ENCODE measurements at regions of chr2 and their contacts with region 1.

Region 1: DNA sequence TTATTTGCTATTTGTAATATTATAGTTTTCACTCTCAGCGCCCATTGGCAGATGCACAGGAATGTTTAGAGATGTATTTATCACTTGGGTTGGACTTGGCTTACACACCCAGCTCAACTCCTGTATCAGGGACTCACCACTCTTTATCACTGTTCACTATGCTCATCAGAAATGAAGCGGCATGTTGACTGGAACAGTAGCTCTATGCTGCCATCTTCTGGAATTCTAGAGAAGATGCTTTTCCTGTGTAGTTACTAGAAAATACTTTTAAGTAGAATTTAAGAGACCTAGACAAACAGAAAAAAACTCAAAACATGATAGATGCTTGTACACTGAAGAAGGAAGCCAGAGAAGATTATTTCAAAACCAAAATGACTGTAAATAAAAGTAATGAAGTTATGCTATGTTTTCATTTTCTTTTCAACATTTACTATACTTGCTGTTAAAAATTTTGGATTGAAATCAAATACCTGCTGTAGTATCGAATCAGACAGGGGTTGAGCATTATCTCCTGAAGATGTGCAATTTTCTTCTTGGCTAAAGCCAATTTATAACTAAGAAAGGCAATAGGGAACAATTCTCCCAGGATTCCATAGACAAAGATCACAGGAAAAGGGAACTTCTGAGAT is 47.4 kb upstream of the NXPH2 start:
- DNase-seq: peak; percentile 39
- H3K4me3 ChIP-seq: no peak overlapping the region
- H3K27ac ChIP-seq: no peak overlapping the region
- H3K27me3 ChIP-seq: no peaks in the 10 kb centered on the region
- CTCF ChIP-seq: peak; percentile 73

Region 2: GRCh38 chr2:137865954-137866540 is 961.5 kb before region 1 on chr2:
- CTCF ChIA-PET with region 1: interaction called, 21 read pairs
- POLR2A ChIA-PET with region 1: no interaction called
- DNase-seq: peak; percentile 16
- H3K4me3 ChIP-seq: no peak overlapping the region
- H3K27ac ChIP-seq: no peak overlapping the region
- H3K27me3 ChIP-seq: no peaks in the 10 kb centered on the region
- CTCF ChIP-seq: peak; percentile 74

Region 3: GRCh38 chr2:137888845-137889244 is 938.7 kb before region 1 on chr2:
- CTCF ChIA-PET with region 1: interaction called, 21 read pairs
- POLR2A ChIA-PET with region 1: no interaction called
- DNase-seq: no peak
- H3K4me3 ChIP-seq: no peak overlapping the region
- H3K27ac ChIP-seq: no peak overlapping the region
- H3K27me3 ChIP-seq: no peaks in the 10 kb centered on the region
- CTCF ChIP-seq: peak; percentile 56

Region 4: DNA sequence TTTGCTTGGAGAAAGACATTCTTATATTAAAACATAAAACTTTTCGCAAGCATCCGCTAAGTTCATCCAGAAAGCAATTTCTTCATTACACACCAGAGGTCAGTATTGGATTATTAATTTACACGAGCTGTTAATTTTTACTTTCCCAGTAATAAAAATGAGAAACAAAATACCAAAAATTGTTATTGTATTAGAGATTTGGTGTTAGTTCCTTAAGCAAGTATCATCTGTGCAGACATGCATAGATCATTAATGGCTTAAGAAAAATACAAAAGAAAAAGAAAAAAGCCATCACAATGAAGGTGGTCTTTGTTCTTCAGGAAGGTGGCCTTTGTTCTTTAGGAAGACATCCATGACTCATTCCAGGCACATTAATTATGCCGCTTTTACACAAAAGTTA is 916.9 kb before region 1 on chr2:
- CTCF ChIA-PET with region 1: interaction called, 40 read pairs
- POLR2A ChIA-PET with region 1: no interaction called
- DNase-seq: no peak
- H3K4me3 ChIP-seq: no peak overlapping the region
- H3K27ac ChIP-seq: no peak overlapping the region
- H3K27me3 ChIP-seq: no peaks in the 10 kb centered on the region
- CTCF ChIP-seq: peak; percentile 58

Region 5: DNA sequence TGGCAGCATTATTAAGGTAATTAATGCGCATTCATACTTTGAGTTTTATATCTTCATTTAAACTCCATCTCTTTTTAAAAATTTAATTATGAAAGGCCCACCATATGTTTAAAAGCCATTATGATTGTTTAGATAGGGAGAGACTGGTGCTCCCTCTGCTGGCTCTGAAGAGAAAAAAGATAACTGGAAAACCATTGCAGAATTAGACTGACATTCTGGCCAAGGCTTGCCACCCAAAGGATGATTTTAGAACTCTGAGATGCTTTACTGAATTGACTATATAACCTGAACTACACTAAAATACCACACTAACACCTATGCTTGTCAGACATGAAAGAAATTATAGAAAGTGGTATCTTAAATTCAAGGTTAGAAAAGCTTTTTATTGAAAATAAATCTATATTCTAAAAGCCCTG is 453.5 kb before region 1 on chr2:
- CTCF ChIA-PET with region 1: interaction called, 12 read pairs
- POLR2A ChIA-PET with region 1: no interaction called
- DNase-seq: peak; percentile 18
- H3K4me3 ChIP-seq: no peak overlapping the region
- H3K27ac ChIP-seq: no peak overlapping the region
- H3K27me3 ChIP-seq: no peaks in the 10 kb centered on the region
- CTCF ChIP-seq: peak; percentile 81

Region 6: GRCh38 chr2:138814120-138814898 is 13.2 kb before region 1 on chr2:
- CTCF ChIA-PET with region 1: interaction called, 15 read pairs
- POLR2A ChIA-PET with region 1: no interaction called
- DNase-seq: no peak
- H3K4me3 ChIP-seq: no peak overlapping the region
- H3K27ac ChIP-seq: no peak overlapping the region
- H3K27me3 ChIP-seq: no peaks in the 10 kb centered on the region
- CTCF ChIP-seq: peak; percentile 11; the same call in 1 of the 2 replicates

Region 7: DNA sequence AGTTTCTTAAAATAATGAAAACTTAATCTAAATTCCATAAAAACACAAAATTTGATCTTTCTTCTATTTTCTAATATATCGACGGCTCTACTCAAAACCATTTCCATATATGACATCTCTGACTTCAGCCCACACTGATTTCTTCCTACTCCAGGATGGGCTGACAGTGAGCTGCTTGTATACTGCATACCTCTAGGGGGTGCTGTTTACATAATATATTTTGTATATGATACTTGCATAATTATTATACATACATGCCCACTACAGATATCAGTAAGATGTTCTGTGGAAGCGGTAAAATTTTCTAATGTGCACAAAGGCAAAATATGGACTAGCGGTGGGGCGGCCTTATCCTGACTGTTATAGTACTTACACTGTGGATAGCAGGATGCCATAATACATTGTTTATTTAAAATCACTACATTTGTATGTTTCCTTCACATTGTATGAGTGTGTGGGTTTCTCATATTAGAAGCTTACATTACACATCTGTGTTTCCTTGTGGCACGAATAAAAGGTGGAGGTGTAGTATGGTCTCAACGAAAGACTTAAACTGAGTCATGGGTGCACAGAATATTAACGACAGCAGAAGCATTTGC is 18.8 kb after region 1 on chr2:
- CTCF ChIA-PET with region 1: interaction called, 33 read pairs
- POLR2A ChIA-PET with region 1: no interaction called
- DNase-seq: no peak
- H3K4me3 ChIP-seq: no peak overlapping the region
- H3K27ac ChIP-seq: no peak overlapping the region
- H3K27me3 ChIP-seq: no peaks in the 10 kb centered on the region
- CTCF ChIP-seq: peak; percentile 72